CD4-positive, alpha-beta T cell (primary cell): ENCODE measurements at regions of chr10 and their contacts with region 1.

Region 1: GRCh38 chr10:75165684-75166622 is 44.6 kb upstream of the VDAC2 start:
- DNase-seq: peak in 4 of 14 experiments; percentile 8 to 73 (median 40)
- ATAC-seq: peak; percentile 51
- H3K4me3 ChIP-seq: peak overlapping the region; percentile 19
- H3K4me3 Mint-ChIP-seq: peak overlapping the region; percentile 58
- H3K27ac ChIP-seq: peak overlapping the region; percentile 56 to 71
- H3K27ac Mint-ChIP-seq: peak overlapping the region; percentile 78
- H3K4me1 ChIP-seq: peaks cover 25% of the 10 kb centered on the region
- H3K4me1 Mint-ChIP-seq: peaks cover 42% of the 10 kb centered on the region
- H3K27me3 ChIP-seq: no peaks in the 10 kb centered on the region
- H3K27me3 Mint-ChIP-seq: no peaks in the 10 kb centered on the region
- CTCF ChIP-seq: no peak

Region 2: DNA sequence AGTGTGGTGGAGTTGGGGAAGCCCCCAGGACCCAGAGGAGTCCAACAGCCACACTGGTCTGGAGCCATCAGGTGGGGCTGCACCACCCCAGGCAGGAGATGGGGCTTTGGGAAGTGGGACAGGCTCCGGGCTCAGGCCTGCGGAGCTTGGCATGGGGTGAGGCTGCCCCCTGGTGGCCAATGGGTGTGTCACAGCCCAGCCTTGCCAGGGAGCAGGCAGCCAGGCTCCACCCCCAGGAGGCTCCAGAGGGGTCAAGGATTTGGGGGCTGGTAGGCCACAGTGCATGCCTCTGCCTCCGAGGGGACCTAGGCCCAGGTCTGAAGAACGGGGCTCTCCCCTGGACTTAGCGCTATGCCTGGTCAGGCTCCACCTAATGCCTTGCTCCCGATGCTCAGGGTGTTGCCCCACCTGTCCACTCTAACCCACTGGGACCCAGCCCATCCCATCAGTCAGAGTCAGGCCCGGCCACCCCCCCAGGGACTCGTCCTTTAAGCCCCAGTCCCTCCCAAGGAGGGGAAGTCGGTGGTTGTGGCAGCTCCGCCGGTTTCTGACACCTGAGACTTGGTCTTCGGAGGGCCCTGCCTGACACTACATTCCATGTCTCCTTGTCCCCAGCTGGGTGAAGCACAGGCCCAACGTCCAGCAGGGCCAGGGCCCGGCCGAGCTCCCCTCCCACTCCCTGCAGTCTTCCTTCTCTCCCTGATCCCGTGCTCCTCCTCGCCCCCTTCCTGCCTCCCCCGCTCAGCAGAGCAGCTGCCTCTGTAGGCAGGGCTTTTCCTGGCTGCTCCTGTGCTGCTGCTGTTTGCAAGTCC is 65.8 kb before region 1 on chr10:
- CTCF ChIA-PET with region 1: no interaction called
- POLR2A ChIA-PET with region 1: no interaction called
- intact Hi-C with region 1: no loop called
- DNase-seq: peak; percentile 60 to 89 (median 77)
- ATAC-seq: peak; percentile 99
- H3K4me3 ChIP-seq: no peak overlapping the region
- H3K4me3 Mint-ChIP-seq: no peak overlapping the region
- H3K27ac ChIP-seq: no peak overlapping the region
- H3K27ac Mint-ChIP-seq: no peak overlapping the region
- H3K4me1 ChIP-seq: peaks cover 8% of the 10 kb centered on the region
- H3K4me1 Mint-ChIP-seq: peaks cover 5% of the 10 kb centered on the region
- H3K27me3 ChIP-seq: no peaks in the 10 kb centered on the region
- H3K27me3 Mint-ChIP-seq: no peaks in the 10 kb centered on the region
- CTCF ChIP-seq: peak; percentile 93

Region 3: GRCh38 chr10:75111367-75111906 is 54.5 kb before region 1 on chr10 and contains the start of gene SAMD8:
- CTCF ChIA-PET with region 1: no interaction called
- POLR2A ChIA-PET with region 1: interaction called, 11 read pairs
- intact Hi-C with region 1: no loop called
- DNase-seq: peak; percentile 90 to 99 (median 94)
- ATAC-seq: peak; percentile 80
- H3K4me3 ChIP-seq: peak within 1 kb of the TSS; percentile 97
- H3K4me3 Mint-ChIP-seq: peak within 1 kb of the TSS; percentile 88
- H3K27ac ChIP-seq: peak within 1 kb of the TSS; percentile 92 to 95
- H3K27ac Mint-ChIP-seq: peak within 1 kb of the TSS; percentile 90
- H3K4me1 ChIP-seq: peaks cover 26% of the 10 kb centered on the region
- H3K4me1 Mint-ChIP-seq: peaks cover 62% of the 10 kb centered on the region
- H3K27me3 ChIP-seq: no peaks in the 10 kb centered on the region
- H3K27me3 Mint-ChIP-seq: no peaks in the 10 kb centered on the region
- CTCF ChIP-seq: no peak
- total RNA-seq, gene SAMD8: 34.1 to 37.4 TPM

Region 4: GRCh38 chr10:75129537-75129936 is 36.4 kb before region 1 on chr10:
- CTCF ChIA-PET with region 1: no interaction called
- POLR2A ChIA-PET with region 1: no interaction called
- intact Hi-C with region 1: no loop called
- DNase-seq: no peak
- ATAC-seq: peak; percentile 24
- H3K4me3 ChIP-seq: no peak overlapping the region
- H3K4me3 Mint-ChIP-seq: no peak overlapping the region
- H3K27ac ChIP-seq: no peak overlapping the region
- H3K27ac Mint-ChIP-seq: no peak overlapping the region
- H3K4me1 ChIP-seq: peaks cover 11% of the 10 kb centered on the region
- H3K4me1 Mint-ChIP-seq: peaks cover 52% of the 10 kb centered on the region
- H3K27me3 ChIP-seq: no peaks in the 10 kb centered on the region
- H3K27me3 Mint-ChIP-seq: no peaks in the 10 kb centered on the region
- CTCF ChIP-seq: no peak